Endothelial cell of umbilical vein (primary cell): ENCODE measurements at regions of chr14 and their contacts with region 1.

Region 1: GRCh38 chr14:95527387-95528002 is 7.4 kb upstream of the GLRX5 start:
- DNase-seq: no peak
- H3K4me3 ChIP-seq: peak overlapping the region in 1 of 3 experiments; percentile 4
- H3K27ac ChIP-seq: peak overlapping the region; percentile 72
- H3K4me1 ChIP-seq: peaks cover 53% of the 10 kb centered on the region
- H3K27me3 ChIP-seq: no peaks in the 10 kb centered on the region
- CTCF ChIP-seq: peak; percentile 60 to 63
- POLR2A ChIP-seq: no peak

Region 2: GRCh38 chr14:95452176-95452892 is 75.2 kb before region 1 on chr14:
- CTCF ChIA-PET with region 1: interaction called, 78 read pairs
- POLR2A ChIA-PET with region 1: no interaction called
- dilution Hi-C with region 1: no loop called
- intact Hi-C with region 1: no loop called
- DNase-seq: peak; percentile 23
- H3K4me3 ChIP-seq: no peak overlapping the region
- H3K27ac ChIP-seq: no peak overlapping the region
- H3K4me1 ChIP-seq: no peaks in the 10 kb centered on the region
- H3K27me3 ChIP-seq: no peaks in the 10 kb centered on the region
- CTCF ChIP-seq: peak; percentile 33 to 49
- POLR2A ChIP-seq: no peak

Region 3: GRCh38 chr14:95483309-95484165 is 44.0 kb before region 1 on chr14:
- CTCF ChIA-PET with region 1: interaction called, 20 read pairs
- POLR2A ChIA-PET with region 1: no interaction called
- dilution Hi-C with region 1: no loop called
- intact Hi-C with region 1: loop called (anchors 1 kb)
- DNase-seq: peak; percentile 98
- H3K4me3 ChIP-seq: no peak overlapping the region
- H3K27ac ChIP-seq: peak overlapping the region; percentile 18
- H3K4me1 ChIP-seq: peaks cover 13% of the 10 kb centered on the region
- H3K27me3 ChIP-seq: no peaks in the 10 kb centered on the region
- CTCF ChIP-seq: no peak
- POLR2A ChIP-seq: no peak

Region 4: DNA sequence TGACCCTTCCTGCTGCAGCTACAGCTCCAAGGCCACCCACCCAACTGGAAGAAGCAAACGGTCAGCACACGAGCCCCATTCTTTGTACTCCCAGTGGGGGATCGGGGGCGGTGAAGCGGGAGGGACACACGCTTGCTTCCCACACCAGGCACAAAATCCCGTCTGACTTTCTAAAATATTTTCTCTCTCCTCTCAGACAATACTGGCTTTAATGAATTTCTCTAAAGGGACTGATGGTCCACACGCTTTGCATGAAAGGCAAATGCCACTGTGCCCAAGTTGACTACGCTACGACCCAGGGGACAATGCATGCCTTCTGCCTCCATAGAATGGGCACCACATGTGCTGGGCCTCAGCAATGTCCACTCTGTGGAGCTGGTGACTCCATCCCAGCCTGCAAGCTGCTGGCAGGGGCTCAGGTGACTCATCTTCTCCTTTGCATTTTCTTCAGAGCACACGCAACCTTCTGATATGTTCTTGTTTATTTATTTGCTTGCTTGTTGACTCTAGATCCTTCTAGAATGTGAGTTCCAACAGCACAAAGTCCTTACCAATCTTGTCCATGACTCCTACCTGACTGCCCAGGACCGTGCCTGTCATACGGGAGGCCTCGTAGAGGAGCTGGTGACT is 26.6 kb before region 1 on chr14:
- CTCF ChIA-PET with region 1: interaction called, 18 read pairs
- POLR2A ChIA-PET with region 1: no interaction called
- dilution Hi-C with region 1: no loop called
- intact Hi-C with region 1: no loop called
- DNase-seq: peak; percentile 73
- H3K4me3 ChIP-seq: no peak overlapping the region
- H3K27ac ChIP-seq: peak overlapping the region; percentile 28
- H3K4me1 ChIP-seq: peaks cover 34% of the 10 kb centered on the region
- H3K27me3 ChIP-seq: no peaks in the 10 kb centered on the region
- CTCF ChIP-seq: no peak
- POLR2A ChIP-seq: no peak

Region 5: DNA sequence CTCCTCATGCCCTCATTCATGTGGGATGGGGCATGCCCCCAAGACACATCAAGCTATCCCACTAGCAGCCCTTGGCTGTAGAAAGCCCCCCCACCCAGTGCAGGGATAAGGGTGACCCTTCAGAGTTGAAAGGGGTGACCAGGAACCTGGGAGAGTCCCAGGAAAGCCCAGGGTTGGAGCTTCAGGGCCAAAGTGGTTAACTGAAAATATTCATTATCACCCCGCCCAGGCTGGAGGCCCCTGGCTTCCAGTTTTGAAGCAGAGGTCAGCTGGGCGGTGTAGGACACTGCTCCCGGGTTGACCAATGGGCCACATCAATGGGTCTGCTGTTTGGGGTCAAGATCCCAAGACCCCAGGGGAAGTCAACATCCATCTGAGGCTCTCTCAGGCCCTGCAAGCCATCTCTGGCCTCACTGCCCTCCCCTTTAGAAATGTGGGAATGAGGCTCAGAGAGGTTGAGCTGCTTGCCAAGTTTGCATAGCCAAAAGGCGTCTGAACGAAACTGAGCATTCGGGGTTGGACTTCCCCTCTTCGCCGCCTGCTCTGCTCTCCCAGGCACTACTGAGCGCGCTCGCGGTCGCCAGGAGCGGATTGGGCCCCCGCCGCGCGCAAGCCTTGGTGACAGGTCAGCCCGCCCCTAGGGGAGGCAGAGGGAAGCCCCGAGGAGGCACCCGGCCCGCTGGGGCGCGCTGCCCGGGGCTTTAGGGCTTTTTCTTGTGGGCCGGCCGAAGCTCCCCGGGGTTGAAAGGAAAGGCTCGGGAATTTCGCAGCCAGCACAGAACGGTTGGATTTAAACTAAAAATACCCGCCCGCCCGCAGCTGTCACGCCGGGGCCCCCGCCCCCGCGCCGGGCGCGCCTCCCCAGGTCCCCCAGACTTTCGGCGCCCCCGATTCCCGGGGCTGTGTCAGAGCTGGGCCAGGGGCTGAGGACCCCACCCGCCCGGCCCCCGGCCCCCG is 11.6 kb before region 1 on chr14:
- CTCF ChIA-PET with region 1: interaction called, 79 read pairs
- POLR2A ChIA-PET with region 1: interaction called, 5 read pairs
- dilution Hi-C with region 1: no loop called
- intact Hi-C with region 1: loop called (anchors 1 kb)
- DNase-seq: peak; percentile 49
- H3K4me3 ChIP-seq: peak overlapping the region; percentile 51 to 58 (median 52)
- H3K27ac ChIP-seq: no peak overlapping the region
- H3K4me1 ChIP-seq: peaks cover 55% of the 10 kb centered on the region
- H3K27me3 ChIP-seq: no peaks in the 10 kb centered on the region
- CTCF ChIP-seq: peak; percentile 24 to 57
- POLR2A ChIP-seq: no peak